ENCODE measurements at regions of chr3 and their contacts with region 1.

Region 1: DNA sequence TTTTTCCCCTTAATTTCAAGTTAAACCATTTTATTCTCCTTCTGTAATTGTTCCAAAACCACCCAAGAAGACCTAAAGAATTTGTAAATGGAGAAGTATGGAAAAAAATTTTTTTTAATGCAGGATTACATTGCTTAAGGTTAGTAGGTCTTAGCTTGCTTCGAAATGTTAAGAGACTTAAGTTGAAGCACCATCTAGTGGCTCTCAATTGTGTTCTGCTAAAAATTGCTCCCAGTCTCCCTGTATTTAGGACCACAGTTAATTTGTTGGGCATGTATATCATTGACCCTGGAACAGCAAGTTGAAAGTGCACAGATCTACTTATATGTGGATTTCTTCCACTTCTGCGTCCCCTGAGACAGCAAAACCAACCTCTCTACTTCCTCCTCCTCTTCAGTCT is 32.4 kb downstream of the CD200R1L start:
- DNase-seq: peak in 1 of 2 donors; percentile 25
- H3K4me3 ChIP-seq: no peak overlapping the region
- H3K27ac ChIP-seq: peak overlapping the region; percentile 68 to 82
- H3K4me1 ChIP-seq: peaks cover 0 to 4% of the 10 kb centered on the region in 2 donors
- H3K27me3 ChIP-seq: no peaks in the 10 kb centered on the region
- CTCF ChIP-seq: peak; percentile 50 to 73 (median 59)
- POLR2A ChIP-seq: no peak

Region 2: DNA sequence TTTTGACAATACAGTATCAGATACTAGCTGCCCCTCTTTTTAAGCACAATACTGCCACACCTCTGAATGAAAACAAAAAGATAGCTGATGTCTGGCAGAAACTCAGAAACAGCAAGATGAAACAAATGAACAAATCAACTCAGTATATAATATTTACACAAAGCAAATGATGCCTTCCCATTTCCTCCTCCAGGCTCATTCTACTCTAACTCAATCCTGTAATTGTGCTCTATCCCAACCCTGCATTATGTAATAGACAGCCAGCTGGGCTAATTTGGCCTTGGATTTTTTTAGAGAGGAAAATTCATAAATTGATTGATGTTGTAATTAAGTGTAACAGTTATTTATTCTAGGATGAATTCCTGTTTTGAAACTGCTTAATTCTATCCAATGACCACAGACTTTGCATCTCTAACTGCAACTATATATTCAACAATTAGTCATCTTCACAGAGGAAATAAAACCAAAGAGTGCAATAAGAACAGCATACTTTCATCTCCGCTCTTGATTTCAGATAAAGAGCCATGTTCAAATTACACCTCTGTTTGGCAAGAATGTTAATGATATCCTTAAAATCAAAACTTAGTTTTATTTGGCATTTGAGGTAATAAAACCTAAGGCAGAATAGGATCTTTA is 258.6 kb before region 1 on chr3:
- intact Hi-C with region 1: no loop called
- DNase-seq: no peak
- H3K4me3 ChIP-seq: no peak overlapping the region
- H3K27ac ChIP-seq: no peak overlapping the region
- H3K4me1 ChIP-seq: peaks cover 0 to 8% of the 10 kb centered on the region in 2 donors
- H3K27me3 ChIP-seq: no peaks in the 10 kb centered on the region
- CTCF ChIP-seq: no peak
- POLR2A ChIP-seq: no peak

Region 3: GRCh38 chr3:112642912-112643506 is 171.3 kb before region 1 on chr3:
- intact Hi-C with region 1: loop called (anchors 5 kb)
- DNase-seq: peak; percentile 87 to 92
- H3K4me3 ChIP-seq: no peak overlapping the region
- H3K27ac ChIP-seq: peak overlapping the region; percentile 86 to 92
- H3K4me1 ChIP-seq: peaks cover 4 to 7% of the 10 kb centered on the region in 2 donors
- H3K27me3 ChIP-seq: no peaks in the 10 kb centered on the region
- CTCF ChIP-seq: peak; percentile 81 to 93 (median 88)
- POLR2A ChIP-seq: no peak

Region 4: GRCh38 chr3:112873632-112874031 is 59.4 kb after region 1 on chr3:
- intact Hi-C with region 1: no loop called
- DNase-seq: no peak
- H3K4me3 ChIP-seq: no peak overlapping the region
- H3K27ac ChIP-seq: no peak overlapping the region
- H3K4me1 ChIP-seq: no peaks in the 10 kb centered on the region
- H3K27me3 ChIP-seq: no peaks in the 10 kb centered on the region
- CTCF ChIP-seq: no peak
- POLR2A ChIP-seq: no peak

Region 5: GRCh38 chr3:113423699-113424098 is 609.4 kb after region 1 on chr3:
- intact Hi-C with region 1: no loop called
- DNase-seq: no peak
- H3K4me3 ChIP-seq: no peak overlapping the region
- H3K27ac ChIP-seq: no peak overlapping the region
- H3K4me1 ChIP-seq: no peaks in the 10 kb centered on the region
- H3K27me3 ChIP-seq: no peaks in the 10 kb centered on the region
- CTCF ChIP-seq: no peak
- POLR2A ChIP-seq: no peak

Region 6: GRCh38 chr3:113523241-113523640 is 709.0 kb after region 1 on chr3:
- intact Hi-C with region 1: no loop called
- DNase-seq: no peak
- H3K4me3 ChIP-seq: no peak overlapping the region
- H3K27ac ChIP-seq: no peak overlapping the region
- H3K4me1 ChIP-seq: no peaks in the 10 kb centered on the region
- H3K27me3 ChIP-seq: peaks cover 0 to 3% of the 10 kb centered on the region in 2 donors
- CTCF ChIP-seq: no peak
- POLR2A ChIP-seq: no peak